ENCODE measurements at regions of chrX and their contacts with region 1.

Region 1: GRCh38 chrX:37879692-37880091 is 32.3 kb upstream of the DYNLT3 start:
- DNase-seq: no peak
- ATAC-seq: no peak
- H3K4me3 Mint-ChIP-seq: no peak overlapping the region
- H3K27ac Mint-ChIP-seq: no peak overlapping the region
- H3K4me1 Mint-ChIP-seq: no peaks in the 10 kb centered on the region
- H3K27me3 Mint-ChIP-seq: no peaks in the 10 kb centered on the region
- CTCF ChIP-seq: no peak

Region 2: GRCh38 chrX:37434362-37434761 is 445.3 kb before region 1 on chrX:
- CTCF ChIA-PET with region 1: no interaction called
- POLR2A ChIA-PET with region 1: interaction called, 10 read pairs
- intact Hi-C with region 1: no loop called
- DNase-seq: no peak
- ATAC-seq: no peak
- H3K4me3 Mint-ChIP-seq: no peak overlapping the region
- H3K27ac Mint-ChIP-seq: no peak overlapping the region
- H3K4me1 Mint-ChIP-seq: no peaks in the 10 kb centered on the region
- H3K27me3 Mint-ChIP-seq: no peaks in the 10 kb centered on the region
- CTCF ChIP-seq: no peak